ENCODE measurements at regions of chr7 and their contacts with region 1.

Region 1: DNA sequence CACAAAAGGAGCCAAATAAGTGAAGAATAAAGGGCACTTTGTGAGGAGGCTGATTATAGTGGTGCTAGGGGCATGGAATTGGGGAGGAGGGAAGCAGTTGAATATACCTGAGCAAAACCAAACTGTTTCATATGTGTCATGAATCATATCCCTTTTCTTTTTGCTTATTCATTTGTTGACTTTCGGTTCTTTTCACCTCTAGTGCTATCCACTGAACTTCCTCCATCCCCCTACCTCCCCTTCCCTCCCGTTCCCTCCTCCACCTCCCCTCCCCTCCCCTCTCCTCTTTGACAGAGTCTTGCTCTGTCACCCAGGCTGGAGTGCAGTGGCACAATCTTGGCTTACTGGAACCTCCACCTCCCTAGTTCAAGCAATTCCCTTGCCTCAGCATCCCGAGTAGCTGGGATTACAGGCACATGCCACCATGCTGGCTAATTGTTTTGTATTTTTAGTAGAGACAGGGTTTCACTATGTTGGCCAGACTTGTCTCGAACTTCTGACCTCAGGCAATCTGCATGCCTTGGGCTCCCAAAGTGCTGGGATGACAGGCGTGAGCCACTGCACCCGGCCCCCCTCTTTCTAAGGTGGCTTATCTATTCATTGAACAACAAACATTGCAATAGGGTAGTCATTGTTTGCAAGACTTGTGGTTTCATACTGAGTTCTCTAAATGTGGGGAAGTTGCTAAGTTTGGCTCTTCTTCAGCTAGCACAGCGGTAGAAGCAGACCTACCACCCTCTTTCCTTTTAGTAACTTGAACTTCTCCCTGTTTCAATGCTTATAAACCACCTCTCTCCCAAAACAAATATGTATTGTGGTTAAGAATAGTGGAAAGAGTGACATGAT is 150.4 kb upstream of the PRPS1L1 start:
- DNase-seq: peak; percentile 77 to 86 (median 80)
- H3K4me3 ChIP-seq: peak overlapping the region; percentile 27 to 72 (median 51)
- H3K4me3 Mint-ChIP-seq: peak overlapping the region; percentile 69 to 82
- H3K27ac ChIP-seq: peak overlapping the region; percentile 74 to 85
- H3K27ac Mint-ChIP-seq: peak overlapping the region; percentile 88 to 98 (median 93)
- H3K4me1 ChIP-seq: peaks cover 21 to 33% of the 10 kb centered on the region in 2 donors
- H3K4me1 Mint-ChIP-seq: peaks cover 29% of the 10 kb centered on the region
- H3K27me3 ChIP-seq: no peaks in the 10 kb centered on the region
- H3K27me3 Mint-ChIP-seq: peaks cover 0 to 2% (median 2%) of the 10 kb centered on the region in 3 donors
- CTCF ChIP-seq: no peak

Region 2: DNA sequence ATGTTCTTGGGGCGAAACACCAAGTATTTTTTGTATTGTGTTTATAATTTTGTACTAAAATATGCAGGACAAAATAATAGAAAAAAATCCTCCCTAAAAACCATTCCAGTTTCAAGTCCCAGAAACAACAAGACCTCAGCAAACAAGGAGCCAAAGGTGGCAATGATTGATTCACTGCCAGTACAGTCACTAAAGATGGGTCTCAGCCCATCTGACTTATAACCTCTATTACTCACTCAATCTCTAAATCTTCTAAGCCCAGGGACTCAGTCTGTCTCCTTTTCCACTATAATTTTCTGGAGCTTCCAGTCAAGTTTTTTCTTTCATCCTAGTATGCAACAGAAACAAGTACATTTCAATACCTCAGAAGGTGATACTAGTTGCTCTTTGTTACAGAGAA is 271.0 kb before region 1 on chr7:
- intact Hi-C with region 1: no loop called
- DNase-seq: no peak
- H3K4me3 ChIP-seq: no peak overlapping the region
- H3K4me3 Mint-ChIP-seq: no peak overlapping the region
- H3K27ac ChIP-seq: no peak overlapping the region
- H3K27ac Mint-ChIP-seq: peak overlapping the region in 1 of 7 donors; percentile 5
- H3K4me1 ChIP-seq: no peaks in the 10 kb centered on the region
- H3K4me1 Mint-ChIP-seq: peaks cover 6% of the 10 kb centered on the region
- H3K27me3 ChIP-seq: no peaks in the 10 kb centered on the region
- H3K27me3 Mint-ChIP-seq: peaks cover 0 to 1% (median 0%) of the 10 kb centered on the region in 3 donors
- CTCF ChIP-seq: no peak

Region 3: GRCh38 chr7:18109762-18110161 is 68.3 kb before region 1 on chr7:
- intact Hi-C with region 1: no loop called
- DNase-seq: no peak
- H3K4me3 ChIP-seq: no peak overlapping the region
- H3K4me3 Mint-ChIP-seq: no peak overlapping the region
- H3K27ac ChIP-seq: no peak overlapping the region
- H3K27ac Mint-ChIP-seq: no peak overlapping the region
- H3K4me1 ChIP-seq: no peaks in the 10 kb centered on the region
- H3K4me1 Mint-ChIP-seq: no peaks in the 10 kb centered on the region
- H3K27me3 ChIP-seq: no peaks in the 10 kb centered on the region
- H3K27me3 Mint-ChIP-seq: no peaks in the 10 kb centered on the region
- CTCF ChIP-seq: no peak

Region 4: GRCh38 chr7:18225067-18225466 is 47.0 kb after region 1 on chr7:
- intact Hi-C with region 1: loop called in 1 of 2 experiments (anchors 5 kb)
- DNase-seq: peak; percentile 27 to 54 (median 30)
- H3K4me3 ChIP-seq: peak overlapping the region in 2 of 3 experiments; percentile 16 to 56
- H3K4me3 Mint-ChIP-seq: peak overlapping the region in 1 of 2 donors; percentile 74
- H3K27ac ChIP-seq: peak overlapping the region; percentile 43 to 81
- H3K27ac Mint-ChIP-seq: peak overlapping the region; percentile 64 to 92 (median 89)
- H3K4me1 ChIP-seq: peaks cover 46 to 72% of the 10 kb centered on the region in 2 donors
- H3K4me1 Mint-ChIP-seq: peaks cover 68% of the 10 kb centered on the region
- H3K27me3 ChIP-seq: no peaks in the 10 kb centered on the region
- H3K27me3 Mint-ChIP-seq: peaks cover 0 to 2% (median 0%) of the 10 kb centered on the region in 3 donors
- CTCF ChIP-seq: no peak